CD8-positive, alpha-beta T cell (primary cell): ENCODE measurements at regions of chr5 and their contacts with region 1.

Region 1: GRCh38 chr5:177006265-177006972 is at the start of gene UIMC1:
- DNase-seq: peak; percentile 83 to 95 (median 91)
- ATAC-seq: peak; percentile 87
- H3K4me3 ChIP-seq: peak within 1 kb of the TSS; percentile 91 to 99
- H3K4me3 Mint-ChIP-seq: peak within 1 kb of the TSS; percentile 94
- H3K27ac ChIP-seq: peak within 1 kb of the TSS; percentile 70 to 88
- H3K27ac Mint-ChIP-seq: peak within 1 kb of the TSS; percentile 94
- H3K4me1 ChIP-seq: peaks cover 27% of the 10 kb centered on the region
- H3K4me1 Mint-ChIP-seq: peaks cover 27% of the 10 kb centered on the region
- H3K27me3 ChIP-seq: no peaks in the 10 kb centered on the region
- H3K27me3 Mint-ChIP-seq: no peaks in the 10 kb centered on the region
- CTCF ChIP-seq: no peak
- total RNA-seq, gene UIMC1: 48.4 to 52.8 TPM

Region 2: GRCh38 chr5:176361437-176362232 is 644.8 kb before region 1 on chr5 and contains the start of gene KIAA1191:
- CTCF ChIA-PET with region 1: no interaction called
- POLR2A ChIA-PET with region 1: no interaction called
- intact Hi-C with region 1: loop called in 1 of 2 experiments (anchors 5 kb)
- DNase-seq: peak; percentile 91 to 98 (median 95)
- ATAC-seq: peak; percentile 89
- H3K4me3 ChIP-seq: peak within 1 kb of the TSS; percentile 72 to 96
- H3K4me3 Mint-ChIP-seq: peak within 1 kb of the TSS; percentile 98
- H3K27ac ChIP-seq: peak within 1 kb of the TSS; percentile 68 to 86
- H3K27ac Mint-ChIP-seq: peak within 1 kb of the TSS; percentile 98
- H3K4me1 ChIP-seq: peaks cover 31% of the 10 kb centered on the region
- H3K4me1 Mint-ChIP-seq: peaks cover 41% of the 10 kb centered on the region
- H3K27me3 ChIP-seq: no peaks in the 10 kb centered on the region
- H3K27me3 Mint-ChIP-seq: no peaks in the 10 kb centered on the region
- CTCF ChIP-seq: no peak
- total RNA-seq, gene KIAA1191: 78.2 to 85.1 TPM

Region 3: DNA sequence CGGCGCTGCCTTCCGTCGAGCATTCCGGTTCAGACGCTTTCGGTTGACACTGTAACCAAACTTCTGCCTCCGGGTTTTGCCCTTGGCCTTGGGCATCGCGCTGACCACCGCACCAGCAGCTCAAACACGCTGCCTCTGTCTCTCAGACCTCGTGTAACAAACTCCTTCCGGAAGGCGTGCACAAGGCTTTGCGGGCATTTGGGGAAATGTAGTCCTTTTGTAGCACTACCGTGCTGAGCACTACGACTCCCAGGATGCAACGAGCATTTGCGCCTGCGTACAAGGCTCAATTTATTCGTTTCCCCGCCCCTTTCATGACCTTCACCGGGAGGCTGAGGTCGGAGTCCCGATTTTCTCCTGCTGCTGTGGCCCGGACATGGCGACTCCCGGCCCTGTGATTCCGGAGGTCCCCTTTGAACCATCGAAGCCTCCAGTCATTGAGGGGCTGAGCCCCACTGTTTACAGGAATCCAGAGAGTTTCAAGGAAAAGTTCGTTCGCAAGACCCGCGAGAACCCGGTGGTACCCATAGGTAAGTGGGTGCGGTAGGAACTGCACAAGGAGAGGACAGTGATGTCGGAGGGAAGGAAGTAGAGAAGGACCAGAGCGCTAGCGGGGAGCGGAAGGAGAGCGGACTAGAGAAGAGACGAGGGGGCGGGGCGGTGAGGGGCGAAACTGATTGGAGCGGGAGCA is 617.8 kb before region 1 on chr5 and contains the starts of genes HIGD2A and NOP16:
- CTCF ChIA-PET with region 1: no interaction called
- POLR2A ChIA-PET with region 1: no interaction called
- intact Hi-C with region 1: loop called in 1 of 2 experiments (anchors 5 kb)
- DNase-seq: peak; percentile 97 to 100 (median 99)
- ATAC-seq: peak; percentile 90
- H3K4me3 ChIP-seq: peak within 1 kb of the TSS; percentile 87 to 89
- H3K4me3 Mint-ChIP-seq: peak within 1 kb of the TSS; percentile 99
- H3K27ac ChIP-seq: peak within 1 kb of the TSS; percentile 90 to 93
- H3K27ac Mint-ChIP-seq: peak within 1 kb of the TSS; percentile 99
- H3K4me1 ChIP-seq: peaks cover 22% of the 10 kb centered on the region
- H3K4me1 Mint-ChIP-seq: peaks cover 36% of the 10 kb centered on the region
- H3K27me3 ChIP-seq: no peaks in the 10 kb centered on the region
- H3K27me3 Mint-ChIP-seq: no peaks in the 10 kb centered on the region
- CTCF ChIP-seq: no peak
- total RNA-seq, gene HIGD2A: 102 to 106 TPM
- total RNA-seq, gene NOP16: 21.6 to 24.2 TPM

Region 4: DNA sequence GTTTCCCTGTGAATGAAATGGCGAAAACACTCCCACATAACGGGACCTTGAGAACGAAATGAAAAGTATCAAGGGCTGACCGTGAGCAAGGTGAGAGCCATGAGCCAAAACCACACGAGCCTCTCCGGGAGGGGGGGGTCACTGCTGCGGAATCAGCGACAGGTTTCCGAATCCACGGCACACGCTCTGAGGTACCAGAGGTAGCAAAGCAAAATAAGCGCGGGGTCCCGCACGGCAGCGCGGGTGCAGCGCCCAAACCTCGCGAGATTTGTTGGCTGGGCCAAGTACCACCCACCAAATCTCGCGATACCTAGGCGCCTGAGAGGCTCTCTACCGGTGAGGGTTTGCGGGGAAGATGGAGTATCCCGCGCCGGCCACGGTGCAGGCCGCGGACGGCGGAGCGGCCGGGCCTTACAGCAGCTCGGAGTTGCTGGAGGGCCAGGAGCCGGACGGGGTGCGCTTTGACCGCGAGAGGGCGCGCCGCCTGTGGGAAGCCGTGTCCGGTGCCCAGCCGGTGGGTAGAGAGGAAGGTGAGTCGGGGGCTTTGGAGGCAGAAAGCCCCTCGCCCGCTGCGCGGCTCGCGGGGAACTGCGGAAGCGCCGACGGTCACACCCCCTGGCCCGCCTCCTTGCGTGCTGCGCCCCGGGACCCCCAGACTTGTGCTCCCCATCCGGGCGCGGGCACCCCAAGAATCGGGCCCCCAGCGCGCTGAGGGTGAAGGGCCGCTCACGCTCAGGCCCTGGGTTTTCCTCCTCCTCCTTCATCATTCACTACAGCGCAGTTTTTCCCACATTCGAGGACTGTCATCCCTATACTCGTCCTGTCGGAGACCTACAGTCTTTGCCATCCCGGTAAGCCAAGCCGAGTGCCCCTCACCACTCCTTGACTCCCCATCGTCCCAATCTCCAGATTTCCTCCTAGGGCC is 16.2 kb after region 1 on chr5 and contains the start of gene ZNF346:
- CTCF ChIA-PET with region 1: interaction called, 5 read pairs
- POLR2A ChIA-PET with region 1: interaction called, 6 read pairs
- intact Hi-C with region 1: loop called (anchors 1 kb)
- DNase-seq: peak; percentile 81 to 97 (median 93)
- ATAC-seq: peak; percentile 99
- H3K4me3 ChIP-seq: peak within 1 kb of the TSS; percentile 89 to 93
- H3K4me3 Mint-ChIP-seq: peak within 1 kb of the TSS; percentile 90
- H3K27ac ChIP-seq: peak within 1 kb of the TSS; percentile 83 to 85
- H3K27ac Mint-ChIP-seq: peak within 1 kb of the TSS; percentile 91
- H3K4me1 ChIP-seq: peaks cover 30% of the 10 kb centered on the region
- H3K4me1 Mint-ChIP-seq: peaks cover 38% of the 10 kb centered on the region
- H3K27me3 ChIP-seq: no peaks in the 10 kb centered on the region
- H3K27me3 Mint-ChIP-seq: no peaks in the 10 kb centered on the region
- CTCF ChIP-seq: no peak
- total RNA-seq, gene ZNF346: 11.5 to 14.9 TPM

Region 5: GRCh38 chr5:177133091-177133852 is 126.9 kb after region 1 on chr5 and contains the start of gene NSD1:
- CTCF ChIA-PET with region 1: no interaction called
- POLR2A ChIA-PET with region 1: no interaction called
- intact Hi-C with region 1: loop called (anchors 2 to 5 kb)
- DNase-seq: peak; percentile 81 to 96 (median 89)
- ATAC-seq: peak; percentile 72
- H3K4me3 ChIP-seq: peak within 1 kb of the TSS; percentile 58 to 60
- H3K4me3 Mint-ChIP-seq: peak within 1 kb of the TSS; percentile 85
- H3K27ac ChIP-seq: peak within 1 kb of the TSS; percentile 64 to 85
- H3K27ac Mint-ChIP-seq: peak within 1 kb of the TSS; percentile 90
- H3K4me1 ChIP-seq: peaks cover 54% of the 10 kb centered on the region
- H3K4me1 Mint-ChIP-seq: peaks cover 55% of the 10 kb centered on the region
- H3K27me3 ChIP-seq: no peaks in the 10 kb centered on the region
- H3K27me3 Mint-ChIP-seq: no peaks in the 10 kb centered on the region
- CTCF ChIP-seq: no peak
- total RNA-seq, gene NSD1: 71.8 to 75.2 TPM

Region 6: DNA sequence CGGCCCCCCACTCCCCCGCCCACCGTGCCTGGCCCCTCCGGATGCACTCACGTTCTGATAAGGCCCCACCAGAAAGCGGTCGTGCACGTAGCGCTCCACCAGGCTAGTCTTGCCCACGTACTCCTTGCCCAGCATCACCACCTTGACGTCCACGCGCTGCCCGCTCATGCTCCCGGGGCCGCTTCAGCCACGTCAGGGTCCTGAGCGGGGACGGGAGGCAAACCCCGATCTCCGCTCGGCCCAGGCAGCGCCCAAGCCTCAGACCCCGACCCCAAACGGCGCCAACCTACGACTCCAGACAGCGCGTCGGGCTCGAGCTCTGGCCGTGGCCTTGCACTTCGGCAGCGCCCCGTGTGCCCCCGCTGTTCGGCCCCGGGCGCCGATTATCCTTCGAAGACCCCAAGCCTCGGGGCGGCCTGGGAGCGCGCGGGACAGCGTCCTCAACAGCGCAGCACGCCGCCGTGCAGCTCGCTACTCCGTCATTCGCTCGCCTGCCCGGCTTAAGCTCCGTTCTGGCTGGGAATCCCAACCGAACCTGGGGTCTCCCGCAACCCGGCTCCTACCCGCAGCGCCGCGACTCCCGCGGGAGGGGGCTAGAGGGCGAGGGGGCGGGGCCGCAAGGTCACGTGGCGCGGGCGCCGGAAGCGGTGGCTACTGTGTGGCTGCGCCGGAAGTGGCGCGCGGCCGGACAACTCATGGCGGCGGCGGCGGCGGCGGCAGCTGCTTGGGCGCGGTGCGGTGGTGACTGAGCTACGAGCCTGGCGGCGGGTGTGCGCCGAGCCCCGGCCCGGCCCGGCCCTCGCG is 296.9 kb after region 1 on chr5 and contains the starts of genes PRELID1 and RAB24:
- CTCF ChIA-PET with region 1: no interaction called
- POLR2A ChIA-PET with region 1: no interaction called
- intact Hi-C with region 1: no loop called
- DNase-seq: peak; percentile 71 to 94 (median 88)
- ATAC-seq: peak; percentile 54
- H3K4me3 ChIP-seq: peak within 1 kb of the TSS; percentile 71 to 80
- H3K4me3 Mint-ChIP-seq: peak within 1 kb of the TSS; percentile 93
- H3K27ac ChIP-seq: peak within 1 kb of the TSS; percentile 71 to 78
- H3K27ac Mint-ChIP-seq: peak within 1 kb of the TSS; percentile 91
- H3K4me1 ChIP-seq: peaks cover 57% of the 10 kb centered on the region
- H3K4me1 Mint-ChIP-seq: peaks cover 65% of the 10 kb centered on the region
- H3K27me3 ChIP-seq: no peaks in the 10 kb centered on the region
- H3K27me3 Mint-ChIP-seq: no peaks in the 10 kb centered on the region
- CTCF ChIP-seq: no peak
- total RNA-seq, gene PRELID1: 15.5 to 23.7 TPM
- total RNA-seq, gene RAB24: 14.1 to 19.8 TPM

Region 7: GRCh38 chr5:177516604-177517568 is 510.5 kb after region 1 on chr5 and contains the start of gene DDX41:
- CTCF ChIA-PET with region 1: no interaction called
- POLR2A ChIA-PET with region 1: no interaction called
- intact Hi-C with region 1: loop called in 1 of 2 experiments (anchors 5 kb)
- DNase-seq: peak; percentile 88 to 98 (median 95)
- ATAC-seq: peak; percentile 88
- H3K4me3 ChIP-seq: peak within 1 kb of the TSS; percentile 95
- H3K4me3 Mint-ChIP-seq: peak within 1 kb of the TSS; percentile 94
- H3K27ac ChIP-seq: peak within 1 kb of the TSS; percentile 61 to 73
- H3K27ac Mint-ChIP-seq: peak within 1 kb of the TSS; percentile 93
- H3K4me1 ChIP-seq: peaks cover 31% of the 10 kb centered on the region
- H3K4me1 Mint-ChIP-seq: peaks cover 46% of the 10 kb centered on the region
- H3K27me3 ChIP-seq: no peaks in the 10 kb centered on the region
- H3K27me3 Mint-ChIP-seq: no peaks in the 10 kb centered on the region
- CTCF ChIP-seq: no peak
- total RNA-seq, gene DDX41: 66.8 to 71.0 TPM